Panc1 (cell line): ENCODE measurements at regions of chr12 and their contacts with region 1.

Region 1: DNA sequence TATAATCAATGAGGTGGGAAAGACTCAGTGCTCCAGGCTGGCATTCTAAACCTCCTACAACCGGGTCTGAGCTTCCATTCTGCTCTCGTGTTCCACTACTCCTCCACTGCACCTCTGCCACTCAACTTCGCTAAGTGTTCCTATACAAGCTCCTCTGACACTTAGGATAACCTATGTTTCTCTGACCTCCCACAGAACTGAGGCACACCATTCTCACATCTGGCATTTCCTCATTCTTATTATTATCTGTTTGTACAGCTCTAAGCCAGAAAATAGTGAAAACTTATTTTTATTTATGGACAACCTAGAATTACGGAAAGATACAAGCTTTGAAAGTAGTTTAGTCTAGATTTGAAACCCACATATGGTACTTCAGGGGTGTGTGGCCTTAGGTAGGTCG is 127.0 kb downstream of the MED13L start:
- DNase-seq: no peak
- ATAC-seq: no peak
- H3K4me3 ChIP-seq: no peak overlapping the region
- H3K27ac ChIP-seq: no peak overlapping the region
- H3K4me1 ChIP-seq: peaks cover 64% of the 10 kb centered on the region
- H3K27me3 ChIP-seq: no peaks in the 10 kb centered on the region
- CTCF ChIP-seq: no peak

Region 2: DNA sequence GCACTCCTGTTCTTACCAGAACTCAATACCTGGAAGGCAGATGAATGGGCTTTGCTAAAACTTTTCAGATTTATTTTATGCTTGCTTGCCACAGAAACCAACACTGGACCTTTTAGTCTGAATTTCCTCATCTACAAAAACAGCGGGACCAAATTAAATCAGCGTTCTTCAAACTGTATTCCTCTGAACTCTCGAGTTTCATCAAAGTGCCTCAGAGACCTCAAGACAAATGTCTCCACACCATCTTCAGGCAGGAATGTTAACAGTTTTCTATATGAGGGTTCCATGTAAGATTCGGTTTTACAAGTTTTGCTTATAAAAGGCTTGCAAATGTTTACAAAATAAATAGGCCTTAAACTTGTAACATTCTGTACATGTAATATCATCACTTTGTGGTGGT is 52.5 kb after region 1 on chr12:
- CTCF ChIA-PET with region 1: no interaction called
- POLR2A ChIA-PET with region 1: interaction called, 12 read pairs
- in situ Hi-C with region 1: no loop called
- intact Hi-C with region 1: no loop called
- DNase-seq: no peak
- ATAC-seq: no peak
- H3K4me3 ChIP-seq: no peak overlapping the region
- H3K27ac ChIP-seq: 0 out of 2 replicates have a peak overlapping the region, but pooled peaks have one; percentile 18
- H3K4me1 ChIP-seq: peaks cover 36% of the 10 kb centered on the region
- H3K27me3 ChIP-seq: no peaks in the 10 kb centered on the region
- CTCF ChIP-seq: no peak